ENCODE measurements at regions of chr5 and their contacts with region 1.

Region 1: GRCh38 chr5:141968914-141969608 is at the start of gene RNF14:
- DNase-seq: peak; percentile 95
- H3K4me3 Mint-ChIP-seq: peak within 1 kb of the TSS; percentile 91
- H3K27ac Mint-ChIP-seq: peak within 1 kb of the TSS; percentile 93
- H3K4me1 Mint-ChIP-seq: peaks cover 25% of the 10 kb centered on the region
- H3K27me3 Mint-ChIP-seq: no peaks in the 10 kb centered on the region
- total RNA-seq, gene RNF14: 22.0 and 24.1 TPM in 2 replicates

Region 2: GRCh38 chr5:141811287-141812155 is 157.5 kb before region 1 on chr5:
- intact Hi-C with region 1: loop called (anchors 10 kb)
- DNase-seq: no peak
- H3K4me3 Mint-ChIP-seq: no peak overlapping the region
- H3K27ac Mint-ChIP-seq: no peak overlapping the region
- H3K4me1 Mint-ChIP-seq: no peaks in the 10 kb centered on the region
- H3K27me3 Mint-ChIP-seq: peaks cover 37% of the 10 kb centered on the region

Region 3: DNA sequence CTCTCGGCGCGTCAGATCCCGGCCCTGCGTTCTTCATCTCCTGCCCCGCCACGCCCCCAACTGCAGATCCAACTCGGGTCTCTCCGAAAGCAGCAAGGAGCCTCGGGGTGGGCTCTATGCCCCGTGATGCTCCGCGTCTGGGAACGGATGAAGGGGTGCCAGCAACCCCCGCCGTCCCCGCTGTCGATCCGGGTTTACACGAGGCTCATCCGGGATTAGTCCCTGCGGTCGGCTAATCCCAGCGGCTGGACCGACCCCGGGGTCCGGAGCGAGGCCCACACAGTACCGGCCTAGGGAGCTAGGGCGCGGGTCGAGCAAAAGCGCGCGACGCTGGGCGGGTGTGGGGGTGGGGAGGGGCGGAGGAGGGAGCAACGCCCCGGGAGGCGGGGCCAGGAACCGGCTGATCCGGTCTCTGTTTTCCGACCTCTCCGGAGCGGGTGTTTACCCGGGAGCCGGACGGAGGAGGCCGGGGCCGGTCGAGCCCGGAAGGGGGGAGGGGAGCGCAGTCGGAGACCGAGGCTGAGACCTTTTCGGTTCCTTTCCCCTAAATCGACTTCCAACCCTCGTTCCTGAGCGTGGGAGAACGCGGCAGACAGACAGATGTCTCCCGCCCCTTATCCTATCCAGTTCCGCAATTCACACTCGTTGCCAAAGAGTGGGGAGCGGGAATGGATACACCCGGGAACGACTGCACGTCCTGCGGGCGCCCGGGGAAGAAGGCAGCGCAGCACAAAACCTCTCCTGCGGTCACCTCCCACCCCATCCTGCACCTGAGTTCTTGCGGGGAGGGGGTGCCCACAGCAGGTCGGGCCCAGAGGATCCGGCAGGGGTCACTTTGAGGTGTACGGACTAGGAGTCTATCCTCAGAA is 119.5 kb before region 1 on chr5:
- intact Hi-C with region 1: loop called (anchors 1 kb)
- DNase-seq: peak; percentile 66
- H3K4me3 Mint-ChIP-seq: peak overlapping the region; percentile 85
- H3K27ac Mint-ChIP-seq: peak overlapping the region; percentile 84
- H3K4me1 Mint-ChIP-seq: peaks cover 14% of the 10 kb centered on the region
- H3K27me3 Mint-ChIP-seq: no peaks in the 10 kb centered on the region

Region 4: DNA sequence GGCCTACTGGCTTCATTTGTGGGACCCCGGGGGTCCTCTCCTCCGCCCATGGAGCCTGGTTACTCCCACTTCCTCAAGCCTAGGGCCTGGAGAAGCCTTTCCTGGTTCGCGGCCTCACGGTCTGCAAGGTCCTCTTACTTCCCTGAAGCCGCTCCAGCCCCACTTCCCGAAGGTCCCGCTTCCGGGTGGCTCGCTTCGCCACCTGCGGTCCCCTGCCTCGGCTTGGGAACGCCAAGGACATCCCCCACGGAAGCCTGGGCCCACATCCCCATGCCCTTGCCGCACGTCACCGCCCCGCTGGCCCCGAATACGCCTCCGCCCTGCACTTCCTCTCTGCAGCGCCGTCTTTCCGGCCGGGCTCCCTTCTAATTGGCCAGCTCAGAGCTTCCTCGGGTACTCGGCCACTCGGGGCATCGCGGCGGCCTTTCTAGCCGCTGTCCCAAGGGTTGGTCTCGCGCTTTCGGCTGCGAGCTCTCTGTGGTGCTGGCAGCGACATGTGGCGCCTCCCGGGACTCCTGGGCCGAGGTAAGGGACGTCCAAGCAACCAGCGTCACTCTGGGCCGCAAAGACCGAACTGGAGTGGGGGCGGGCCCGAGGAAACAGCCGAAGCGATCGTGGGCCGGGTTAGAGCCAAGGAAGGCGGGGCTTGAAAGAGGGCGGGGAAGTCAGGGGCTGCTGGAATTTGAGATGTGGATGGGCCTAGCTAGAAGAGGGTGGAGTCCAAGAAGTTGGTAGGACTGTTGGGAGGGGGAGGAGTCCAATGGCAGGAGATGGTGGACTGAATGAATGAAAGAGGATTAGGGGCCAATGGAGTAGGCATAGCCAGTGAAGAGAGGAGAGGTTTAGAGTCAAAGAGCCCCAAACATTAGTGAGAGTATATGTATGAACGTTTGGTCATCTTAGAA is 45.4 kb before region 1 on chr5 and contains the start of gene DELE1:
- intact Hi-C with region 1: loop called (anchors 1 kb)
- DNase-seq: peak; percentile 91
- H3K4me3 Mint-ChIP-seq: peak within 1 kb of the TSS; percentile 88
- H3K27ac Mint-ChIP-seq: peak within 1 kb of the TSS; percentile 89
- H3K4me1 Mint-ChIP-seq: peaks cover 13% of the 10 kb centered on the region
- H3K27me3 Mint-ChIP-seq: no peaks in the 10 kb centered on the region
- total RNA-seq, gene DELE1: 74.1 and 76.8 TPM in 2 replicates

Region 5: DNA sequence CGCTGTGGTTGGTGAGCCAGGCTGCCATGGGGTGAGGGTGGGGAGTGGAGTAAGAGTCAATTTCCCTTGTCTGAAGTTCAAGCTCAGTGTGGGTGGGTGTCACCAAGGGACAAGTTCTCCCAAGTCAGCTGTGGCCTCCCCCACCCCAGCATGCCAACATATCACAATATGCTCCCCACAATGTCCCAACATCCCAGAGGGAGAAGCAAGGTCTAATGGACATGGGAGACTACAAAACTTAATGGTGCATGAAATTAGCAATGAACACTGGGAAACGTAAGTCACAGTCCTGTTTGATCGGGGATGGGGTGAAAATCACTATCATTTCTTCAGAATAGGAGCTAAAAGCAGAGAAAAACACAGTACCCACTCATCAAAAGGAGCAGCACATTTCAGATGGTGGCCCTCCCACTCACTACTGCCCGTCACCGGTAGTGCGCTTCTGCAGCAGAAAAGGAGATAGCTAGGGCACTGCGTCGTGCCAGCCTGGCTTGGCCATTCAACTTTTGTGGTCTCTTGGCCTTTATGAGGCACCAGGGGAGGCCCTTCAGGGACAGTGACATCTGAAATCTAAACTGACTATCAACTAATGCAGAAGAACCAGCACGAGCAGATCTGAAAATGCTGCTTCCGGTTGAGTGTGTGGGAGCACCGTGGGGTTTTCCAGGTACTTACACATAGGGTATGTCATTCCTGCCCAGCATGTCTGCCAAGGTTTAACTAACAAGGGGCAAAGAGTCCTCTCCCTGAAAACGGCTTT is 119.0 kb after region 1 on chr5:
- intact Hi-C with region 1: no loop called
- DNase-seq: no peak
- H3K4me3 Mint-ChIP-seq: no peak overlapping the region
- H3K27ac Mint-ChIP-seq: peak overlapping the region; percentile 91
- H3K4me1 Mint-ChIP-seq: peaks cover 48% of the 10 kb centered on the region
- H3K27me3 Mint-ChIP-seq: no peaks in the 10 kb centered on the region

Measured in activated T-helper 2 cell treated with anti-CD3 and anti-CD28 coated beads, Interferon-gamma antibody, Interleukin-2, Interleukin-4, amounts not matched to agents 10 μg/mL and 5 μg/mL and 100 μg/mL, durations not matched to agents 14 hours and 24 hours and 36 hours (primary cell).